OCI-LY7 (cell line): ENCODE measurements at regions of chrX and their contacts with region 1.

Region 1: DNA sequence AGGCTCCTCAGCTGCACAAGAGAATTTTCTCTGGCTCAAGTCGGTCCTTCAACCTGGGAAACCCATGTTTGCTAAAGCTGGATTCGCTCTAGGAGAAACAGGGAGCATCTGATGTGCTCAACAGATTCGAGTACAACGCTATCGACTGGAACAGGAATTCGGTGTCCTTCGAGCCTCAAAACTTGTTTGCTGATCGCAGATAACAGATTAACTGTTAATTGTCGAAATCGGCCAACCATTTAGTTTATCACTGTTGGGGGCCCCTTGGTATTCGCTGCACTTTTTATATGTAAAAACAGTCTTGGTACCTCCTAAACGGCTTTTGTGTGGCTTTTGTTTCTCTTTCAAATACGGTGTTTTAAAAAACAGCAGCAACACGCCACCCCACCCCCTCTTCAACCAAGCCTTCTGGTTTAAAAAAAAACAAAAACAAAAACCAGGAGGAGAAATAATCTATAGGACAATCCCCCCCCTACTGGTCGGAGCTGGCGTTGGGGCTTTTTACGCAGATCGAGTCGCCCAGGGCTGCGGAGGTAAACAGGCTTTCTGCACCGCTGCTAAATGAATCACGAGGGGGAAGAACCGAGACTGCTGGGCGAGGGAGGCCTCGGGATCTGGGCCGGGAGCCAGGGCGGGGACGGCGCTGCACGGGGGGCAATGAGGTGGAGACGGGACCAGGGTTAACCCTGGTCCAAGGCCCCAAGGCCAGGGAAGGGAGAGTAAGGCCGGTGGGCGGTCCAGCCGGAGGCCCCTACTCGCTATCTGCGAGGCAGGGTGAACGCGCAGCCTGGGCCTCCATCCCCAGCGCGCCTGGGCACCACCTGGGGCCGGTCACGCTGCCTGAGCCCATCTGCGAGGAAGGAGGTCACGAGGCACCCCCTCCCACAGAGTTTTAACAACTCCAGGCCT is 71.7 kb upstream of the BCOR start:
- DNase-seq: peak; percentile 92
- H3K4me3 ChIP-seq: peak overlapping the region; percentile 74
- H3K27ac ChIP-seq: peak overlapping the region; percentile 100
- H3K4me1 ChIP-seq: peaks cover 81% of the 10 kb centered on the region
- CTCF ChIP-seq: peak; percentile 76

Region 2: GRCh38 chrX:38803586-38804431 is 1365.6 kb before region 1 on chrX:
- CTCF ChIA-PET with region 1: no interaction called
- POLR2A ChIA-PET with region 1: interaction called, 6 read pairs
- intact Hi-C with region 1: loop called (anchors 5 kb)
- DNase-seq: peak; percentile 77
- H3K4me3 ChIP-seq: peak overlapping the region; percentile 99
- H3K27ac ChIP-seq: peak overlapping the region; percentile 89
- H3K4me1 ChIP-seq: peaks cover 29% of the 10 kb centered on the region
- CTCF ChIP-seq: no peak

Region 3: DNA sequence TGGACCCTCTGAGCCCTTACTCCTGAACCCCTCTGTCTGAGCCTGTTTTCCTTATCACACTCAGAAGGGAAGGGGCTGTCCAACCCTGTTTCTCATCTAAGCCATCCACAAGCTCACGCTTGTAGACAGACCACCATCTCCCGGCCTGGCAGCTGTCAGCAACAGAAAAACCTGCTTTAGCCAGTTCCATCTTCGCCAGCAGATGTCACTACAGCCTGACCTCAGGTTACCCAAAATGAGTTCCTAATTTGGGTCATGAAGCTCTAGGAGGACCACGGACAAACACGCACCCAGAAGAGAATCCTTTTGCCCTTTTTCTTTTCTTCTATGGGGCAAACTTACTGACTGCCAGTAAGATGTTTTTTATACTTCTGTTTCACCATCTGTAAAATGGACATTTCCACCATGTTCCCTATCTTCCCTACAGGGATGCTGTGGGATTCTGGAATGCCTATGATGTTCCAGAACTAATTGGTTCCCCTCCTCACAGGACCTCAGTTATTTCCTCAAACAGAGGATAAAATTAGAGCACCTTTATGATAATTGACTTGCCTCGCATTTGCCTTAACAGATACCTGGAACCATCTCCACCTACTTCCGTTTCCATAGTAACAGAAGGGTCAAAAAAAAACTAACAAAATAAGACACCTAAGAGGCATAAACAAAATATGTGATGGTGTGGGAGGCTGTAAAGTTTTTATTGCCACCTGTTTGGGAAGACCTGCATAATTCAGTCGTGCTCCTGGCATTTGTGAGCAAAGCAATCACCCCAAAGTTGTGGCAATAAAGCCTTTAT is 516.9 kb before region 1 on chrX:
- CTCF ChIA-PET with region 1: no interaction called
- POLR2A ChIA-PET with region 1: no interaction called
- intact Hi-C with region 1: loop called (anchors 2 kb)
- DNase-seq: peak; percentile 56
- H3K4me3 ChIP-seq: no peak overlapping the region
- H3K27ac ChIP-seq: no peak overlapping the region
- H3K4me1 ChIP-seq: no peaks in the 10 kb centered on the region
- CTCF ChIP-seq: peak; percentile 69

Region 4: DNA sequence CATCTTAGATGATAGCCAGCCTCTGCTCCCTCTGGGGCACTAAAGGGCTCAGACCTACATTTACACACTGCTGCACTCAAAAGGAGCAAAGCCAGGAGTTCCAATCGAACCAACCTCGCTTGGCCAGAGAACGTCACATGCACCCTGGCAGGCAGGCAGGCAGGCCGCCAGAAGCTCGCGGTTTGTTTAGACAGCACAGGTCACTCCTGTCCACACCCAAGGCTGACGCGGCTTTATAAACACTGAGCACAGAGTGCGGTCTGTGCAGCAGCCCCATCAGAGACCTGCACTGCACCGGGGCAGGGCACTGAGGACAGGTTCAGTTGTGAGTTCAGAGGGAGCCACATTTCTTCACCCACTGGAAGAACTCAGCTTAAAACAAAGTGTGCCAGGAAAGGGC is 215.6 kb before region 1 on chrX:
- CTCF ChIA-PET with region 1: no interaction called
- POLR2A ChIA-PET with region 1: no interaction called
- intact Hi-C with region 1: loop called (anchors 10 kb)
- DNase-seq: no peak
- H3K4me3 ChIP-seq: peak overlapping the region; percentile 34
- H3K27ac ChIP-seq: peak overlapping the region; percentile 95
- H3K4me1 ChIP-seq: peaks cover 66% of the 10 kb centered on the region
- CTCF ChIP-seq: no peak

Region 5: DNA sequence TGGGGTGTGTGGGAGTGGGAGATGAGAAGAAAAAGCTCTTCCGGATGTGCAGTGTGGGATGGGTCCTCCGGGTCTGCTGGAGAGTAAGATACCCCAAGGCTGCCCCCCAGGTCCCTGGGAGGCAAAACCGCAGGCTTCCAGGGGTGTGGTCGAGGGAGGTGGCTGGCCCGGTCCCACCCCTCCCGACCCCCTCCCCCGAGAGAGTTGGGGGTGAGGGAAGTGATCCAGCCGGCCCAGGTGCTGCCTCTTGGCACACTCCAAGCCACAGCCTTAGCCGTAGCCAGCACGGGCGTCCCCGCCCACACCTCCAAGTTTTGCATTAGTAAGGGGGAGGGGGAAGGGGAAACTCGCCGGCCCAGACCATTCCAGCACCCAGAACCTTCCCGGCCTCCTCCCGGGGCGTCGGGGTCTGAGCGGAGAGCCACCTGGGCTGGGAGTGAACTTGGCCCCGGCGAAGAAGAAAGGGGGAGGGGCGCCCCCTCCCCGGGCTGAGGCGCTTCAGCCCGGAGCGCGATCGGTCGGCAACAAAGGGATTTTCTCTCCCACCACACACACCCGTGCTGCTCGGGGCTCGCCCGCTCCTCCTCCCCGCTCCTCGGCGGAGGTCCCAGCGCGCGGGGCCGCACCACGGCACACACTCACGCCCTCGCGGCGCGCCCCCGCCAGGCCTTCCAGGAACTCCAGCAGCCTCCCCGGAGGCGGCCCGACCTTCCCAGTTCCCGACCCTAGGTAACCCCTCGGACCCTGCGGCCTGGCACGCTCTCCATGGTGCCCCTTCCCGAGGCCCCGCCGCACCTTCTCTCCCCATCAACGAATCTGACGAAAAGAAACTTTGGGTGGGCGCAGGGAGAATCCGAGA is 86.1 kb before region 1 on chrX:
- CTCF ChIA-PET with region 1: no interaction called
- POLR2A ChIA-PET with region 1: no interaction called
- intact Hi-C with region 1: no loop called
- DNase-seq: no peak
- H3K4me3 ChIP-seq: no peak overlapping the region
- H3K27ac ChIP-seq: no peak overlapping the region
- H3K4me1 ChIP-seq: peaks cover 43% of the 10 kb centered on the region
- CTCF ChIP-seq: no peak

Region 6: DNA sequence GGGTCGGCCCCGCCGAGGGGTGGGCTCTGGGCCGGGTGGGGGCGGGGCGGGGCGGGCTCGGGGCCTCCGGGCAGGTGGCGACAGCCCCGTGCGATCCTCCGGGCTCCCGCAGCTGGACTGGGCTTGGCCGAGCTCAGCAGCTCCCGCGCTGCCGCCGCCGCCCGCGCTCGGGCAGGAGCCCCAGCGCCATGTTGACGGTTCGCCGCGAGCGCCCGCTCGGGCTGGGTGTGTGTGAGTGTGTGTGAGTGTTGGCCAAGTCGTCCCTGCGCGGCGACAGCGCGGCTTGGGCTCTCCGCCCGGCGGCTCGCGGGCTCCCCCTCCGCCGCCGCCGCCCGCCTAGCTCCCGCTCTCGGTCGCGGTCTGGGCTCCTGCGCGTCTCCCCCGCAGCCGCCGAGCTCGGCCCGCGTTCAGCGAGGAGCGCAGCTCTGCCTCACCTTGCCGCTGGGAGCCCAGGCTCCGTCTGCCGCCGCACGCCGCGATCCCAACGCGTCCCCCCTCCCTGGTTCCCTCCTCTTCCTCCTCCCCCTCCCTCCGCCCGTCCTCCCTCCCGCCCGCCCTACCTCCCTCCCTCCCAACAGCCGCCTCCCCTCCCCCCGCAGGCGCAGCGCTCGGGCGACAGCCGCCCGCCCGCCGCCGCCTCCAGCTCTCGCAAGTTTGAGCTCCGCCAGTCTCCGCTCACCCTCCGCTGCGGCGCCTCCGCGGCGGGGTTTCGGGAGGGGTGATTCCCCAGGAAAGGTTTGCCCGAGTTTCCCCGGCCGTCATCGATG is 71.8 kb before region 1 on chrX and contains the start of gene BCOR:
- CTCF ChIA-PET with region 1: interaction called, 4 read pairs
- POLR2A ChIA-PET with region 1: interaction called, 55 read pairs
- intact Hi-C with region 1: loop called (anchors 1 kb)
- DNase-seq: peak; percentile 74
- H3K4me3 ChIP-seq: peak within 1 kb of the TSS; percentile 90
- H3K27ac ChIP-seq: peak within 1 kb of the TSS; percentile 99
- H3K4me1 ChIP-seq: peaks cover 55% of the 10 kb centered on the region
- CTCF ChIP-seq: no peak
- total RNA-seq, gene BCOR: 55.6 and 64.3 TPM in 2 replicates

Region 7: DNA sequence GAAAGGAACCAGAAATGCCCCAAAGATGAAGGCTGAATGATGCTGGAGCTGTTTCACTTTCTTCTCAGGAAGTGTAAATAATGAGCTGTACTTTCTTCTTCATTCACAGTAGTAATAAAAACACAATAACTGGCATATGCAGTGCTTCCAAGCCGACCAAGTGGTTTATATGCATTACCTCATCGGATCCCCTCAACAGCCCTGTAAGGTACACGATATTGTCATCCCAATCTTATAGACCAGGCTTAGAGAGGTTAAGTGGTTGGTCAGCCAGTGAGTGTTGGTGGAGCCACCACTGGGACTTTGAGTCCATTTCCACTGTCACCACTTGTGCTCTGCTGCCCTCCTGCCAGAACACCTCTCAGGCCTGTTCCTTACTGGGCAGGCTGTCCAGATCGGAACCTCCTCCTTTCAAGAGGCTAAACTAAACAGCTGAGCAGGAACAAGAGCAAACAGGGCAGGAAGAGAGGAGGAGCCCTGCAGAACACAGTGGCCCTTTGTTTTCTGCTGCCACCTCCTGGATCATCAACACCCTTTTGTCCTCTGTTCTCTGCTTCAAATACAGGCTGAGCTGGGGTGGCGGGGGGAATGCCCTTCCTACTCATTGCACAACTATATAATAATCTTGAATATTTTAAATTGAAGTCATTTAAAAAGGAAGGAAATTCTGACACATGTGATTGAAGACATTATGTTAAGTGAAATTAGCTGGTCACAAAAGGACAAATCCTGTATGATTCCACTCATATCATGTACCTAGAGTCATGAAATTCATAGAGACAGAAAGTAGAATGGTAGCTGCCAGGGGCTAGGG is 298.8 kb after region 1 on chrX:
- CTCF ChIA-PET with region 1: no interaction called
- POLR2A ChIA-PET with region 1: no interaction called
- intact Hi-C with region 1: loop called (anchors 5 kb)
- DNase-seq: peak; percentile 48
- H3K4me3 ChIP-seq: no peak overlapping the region
- H3K27ac ChIP-seq: no peak overlapping the region
- H3K4me1 ChIP-seq: peaks cover 10% of the 10 kb centered on the region
- CTCF ChIP-seq: peak; percentile 56